ENCODE measurements at regions of chr3 and their contacts with region 1.

Region 1: GRCh38 chr3:16280671-16281070 is 15.7 kb downstream of the OXNAD1 start:
- DNase-seq: no peak
- H3K4me3 ChIP-seq: no peak overlapping the region
- CTCF ChIP-seq: no peak

Region 2: DNA sequence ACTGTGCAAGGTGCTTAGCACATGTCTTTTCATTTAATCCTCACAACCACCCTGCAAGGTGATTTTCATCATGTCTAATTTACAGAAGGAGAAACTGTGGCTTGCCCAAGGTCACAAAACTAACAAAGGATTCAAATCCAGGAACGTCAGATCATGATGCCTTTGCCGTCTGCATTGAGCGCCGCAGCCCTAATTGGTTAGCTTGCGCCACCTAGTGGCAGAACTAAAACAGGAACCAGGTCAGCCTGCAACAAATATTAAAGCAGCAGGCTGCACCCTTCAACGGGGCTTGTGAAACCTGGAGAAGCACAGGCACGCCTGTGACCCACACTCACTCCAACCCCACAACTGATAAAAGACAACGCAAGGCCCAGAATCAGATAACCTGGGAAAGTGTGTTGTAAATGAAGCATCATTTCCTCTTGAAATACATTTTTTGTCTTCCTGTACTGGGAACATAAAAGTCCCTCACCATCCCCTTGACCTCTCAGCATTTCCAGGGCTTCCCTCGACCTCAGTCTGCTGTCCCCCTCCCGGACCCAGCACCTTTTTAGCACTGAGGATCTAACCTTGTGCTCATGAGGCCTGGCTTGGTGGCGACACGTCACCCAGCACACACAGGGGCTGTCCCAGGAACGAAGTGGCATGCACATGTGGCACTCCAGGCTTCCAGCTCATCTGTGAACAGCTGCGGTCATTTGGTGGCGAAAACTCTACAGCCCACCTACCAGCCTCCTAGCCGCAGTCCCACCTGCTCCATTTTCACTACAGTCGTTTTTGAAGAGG is 33.2 kb before region 1 on chr3:
- CTCF ChIA-PET with region 1: no interaction called
- POLR2A ChIA-PET with region 1: no interaction called
- DNase-seq: peak; percentile 31
- H3K4me3 ChIP-seq: no peak overlapping the region
- CTCF ChIP-seq: peak; percentile 82

Region 3: DNA sequence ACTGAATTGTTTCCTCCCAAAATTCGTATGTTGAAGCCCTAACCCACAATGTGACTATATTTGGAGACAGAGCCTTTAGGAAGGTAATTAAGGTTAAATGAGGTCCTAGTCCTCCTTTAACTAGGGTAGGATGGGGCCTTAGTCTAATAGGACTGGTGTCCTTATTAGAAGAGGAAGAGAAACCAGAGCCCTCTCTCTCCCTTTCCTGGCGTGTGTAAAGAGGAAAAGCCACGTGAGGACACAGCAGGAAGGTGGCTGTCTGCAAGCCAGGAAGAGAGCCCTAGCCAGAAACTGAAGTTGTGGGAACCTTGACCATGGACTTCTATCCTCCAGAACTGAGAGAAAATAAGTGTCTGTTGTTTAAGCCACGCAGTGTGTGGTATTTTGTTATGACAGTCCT is 78.7 kb after region 1 on chr3:
- CTCF ChIA-PET with region 1: no interaction called
- POLR2A ChIA-PET with region 1: no interaction called
- DNase-seq: no peak
- H3K4me3 ChIP-seq: no peak overlapping the region
- CTCF ChIP-seq: no peak

Region 4: DNA sequence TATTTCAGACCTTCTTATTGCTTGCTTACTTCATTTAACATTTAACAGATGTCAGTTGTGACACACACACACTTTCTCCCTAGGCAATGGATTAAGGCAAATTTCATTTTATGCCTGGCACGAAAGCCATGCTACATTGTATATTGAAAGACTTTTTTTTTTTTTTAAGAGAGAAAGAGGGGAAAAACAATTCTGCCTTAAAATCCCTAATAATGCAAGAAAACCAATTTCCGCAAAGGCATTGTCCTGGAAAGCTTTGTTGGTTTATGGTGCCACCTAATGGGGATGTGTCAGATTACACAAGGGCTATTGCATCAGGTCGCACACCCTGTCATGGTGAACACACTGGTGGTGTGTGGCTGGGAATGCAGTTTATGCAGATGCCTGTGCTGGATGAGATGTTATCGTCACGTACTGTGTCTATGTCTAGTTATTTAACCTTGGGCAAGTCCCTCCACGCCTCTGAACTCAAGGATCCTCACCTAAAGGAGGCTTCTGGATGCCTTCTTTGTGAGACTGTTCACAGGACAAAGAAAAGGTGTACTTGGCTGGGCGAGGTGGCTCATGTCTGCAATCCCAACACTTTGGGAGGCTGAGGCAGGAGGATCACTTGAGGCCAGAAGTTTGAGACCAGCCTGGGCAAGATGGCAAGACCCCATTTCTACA is 270.1 kb after region 1 on chr3:
- CTCF ChIA-PET with region 1: interaction called, 25 read pairs
- POLR2A ChIA-PET with region 1: no interaction called
- DNase-seq: peak; percentile 57
- H3K4me3 ChIP-seq: no peak overlapping the region; the same call in 1 of the 2 replicates
- CTCF ChIP-seq: peak; percentile 84